ENCODE measurements at regions of chr16 and their contacts with region 1.

Region 1: DNA sequence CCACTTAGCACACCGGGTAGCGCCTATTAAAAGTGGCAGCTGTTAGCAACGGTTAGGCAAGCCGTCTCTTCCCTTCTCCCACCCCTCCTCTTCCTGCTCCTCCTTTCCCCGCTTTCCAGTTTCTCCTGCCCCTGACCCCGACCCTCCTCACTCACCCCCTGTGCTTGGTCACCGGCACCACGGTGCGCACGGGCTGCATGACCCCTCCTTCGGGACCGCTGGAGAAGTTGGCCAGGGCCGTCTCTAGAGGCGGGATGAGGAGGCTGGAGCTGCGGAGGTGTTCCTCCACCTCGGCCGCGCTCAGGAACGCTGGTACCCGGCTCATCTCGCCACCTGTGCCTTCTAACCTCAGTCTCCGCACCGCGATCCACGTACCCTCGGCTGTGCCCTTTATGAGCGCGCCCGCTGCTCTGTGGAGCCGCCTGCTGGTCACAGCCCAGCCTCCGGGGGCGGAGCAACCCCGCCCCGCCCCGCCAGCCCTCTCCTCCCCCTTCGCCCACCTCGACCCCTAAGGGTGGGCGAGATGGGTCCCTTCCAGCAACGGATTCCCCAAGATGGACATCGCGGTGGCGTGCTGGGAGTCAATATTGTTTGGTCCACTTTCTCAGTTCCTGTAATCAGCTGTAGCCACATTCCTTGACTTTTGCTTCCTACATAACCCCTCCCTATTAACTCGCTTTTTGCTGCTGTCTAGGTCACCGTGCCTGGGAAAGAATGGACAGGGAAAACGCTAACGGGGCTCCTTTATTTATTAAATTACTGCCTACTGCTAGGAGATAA is at the start of gene CRYM:
- DNase-seq: peak; percentile 55
- H3K27ac ChIP-seq: no peak within 1 kb of the TSS
- CTCF ChIP-seq: peak; percentile 65

Region 2: DNA sequence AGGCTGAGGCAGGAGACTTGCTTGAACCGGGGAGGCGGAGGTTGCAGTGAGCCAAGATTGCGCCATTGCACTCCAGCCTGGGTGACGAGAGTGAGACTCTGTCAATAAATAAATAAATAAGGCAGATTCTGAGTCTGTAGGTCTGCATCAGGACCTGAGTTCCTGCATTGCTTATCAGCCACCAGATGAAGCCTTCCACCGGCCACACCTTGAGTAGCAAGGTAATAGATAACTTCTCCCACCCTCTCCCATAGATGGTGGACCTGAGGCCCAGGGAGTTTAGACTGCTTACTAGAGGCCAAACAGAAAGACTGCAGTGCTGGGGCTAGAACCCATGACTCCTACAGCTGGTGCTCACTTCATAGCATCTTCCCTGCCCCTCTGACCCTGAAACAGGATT is 88.8 kb before region 1 on chr16:
- CTCF ChIA-PET with region 1: interaction called, 11 read pairs
- POLR2A ChIA-PET with region 1: no interaction called
- DNase-seq: no peak
- H3K27ac ChIP-seq: no peak overlapping the region
- CTCF ChIP-seq: no peak

Region 3: DNA sequence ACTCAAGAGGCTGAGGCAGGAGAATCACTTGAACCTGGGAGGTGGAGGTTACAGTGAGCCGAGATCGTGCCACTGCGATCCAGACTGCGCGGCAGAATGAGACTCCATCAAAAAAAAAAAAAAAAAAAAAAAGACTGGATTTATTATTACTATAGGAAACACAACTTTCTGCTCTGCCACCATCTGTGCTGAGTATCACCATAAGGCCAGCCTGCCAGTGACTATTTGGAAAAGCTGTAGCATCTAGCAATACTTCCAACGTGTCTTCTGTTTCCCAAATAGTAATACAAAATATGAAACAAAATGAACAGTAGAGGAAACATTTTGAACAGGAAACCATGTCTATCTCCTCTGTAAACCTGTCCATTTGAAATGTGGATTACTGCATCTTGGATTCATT is 43.6 kb after region 1 on chr16:
- CTCF ChIA-PET with region 1: no interaction called
- POLR2A ChIA-PET with region 1: no interaction called
- DNase-seq: no peak
- H3K27ac ChIP-seq: no peak overlapping the region
- CTCF ChIP-seq: no peak

Measured in RWPE1 (cell line).